Posterior vena cava (tissue), 2 donors: ENCODE measurements at regions of chr3 and their contacts with region 1.

Region 1: DNA sequence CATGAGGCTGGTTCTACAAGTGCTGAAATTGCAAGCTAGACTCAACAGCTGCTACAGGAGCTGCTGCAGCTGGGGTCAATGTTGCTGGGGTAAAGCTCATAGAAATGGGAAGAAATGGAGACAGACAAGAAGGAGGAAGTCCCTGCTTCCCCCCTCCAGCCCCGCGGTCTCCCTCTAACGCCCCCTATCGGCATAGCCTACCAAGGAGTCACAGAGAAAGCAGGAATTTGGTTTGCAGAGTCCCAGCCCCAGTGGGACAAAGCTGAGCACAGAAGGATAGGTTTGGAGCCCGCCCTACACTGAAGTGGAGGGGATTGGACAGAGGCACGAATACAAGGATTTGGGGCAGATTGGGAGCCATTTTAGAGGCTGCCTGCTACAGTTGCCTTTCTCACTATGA is 176.9 kb upstream of the ANKRD28 start:
- DNase-seq: no peak

Region 2: DNA sequence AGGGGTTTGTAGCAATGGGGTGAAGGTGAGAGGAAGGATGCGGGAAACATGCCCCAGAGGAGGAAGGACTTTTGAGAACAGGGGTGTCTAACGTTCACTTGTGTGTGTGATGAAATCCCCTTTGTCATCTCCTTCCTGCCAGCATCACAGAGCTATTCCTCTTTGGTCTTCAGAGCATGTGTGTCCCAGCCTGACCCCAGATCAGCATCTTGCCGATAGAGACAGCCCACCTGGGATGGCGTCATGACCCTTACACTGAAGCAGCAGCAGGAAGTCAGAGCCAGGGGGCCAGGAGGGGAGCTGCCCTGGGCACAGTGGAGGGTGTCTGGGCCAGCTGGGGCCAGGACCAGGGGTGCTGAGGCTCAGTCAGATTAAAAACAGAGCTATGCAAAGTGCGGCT is 1404.6 kb before region 1 on chr3:
- intact Hi-C with region 1: loop called in 1 of 2 experiments (anchors 5 kb)
- DNase-seq: no peak

Region 3: DNA sequence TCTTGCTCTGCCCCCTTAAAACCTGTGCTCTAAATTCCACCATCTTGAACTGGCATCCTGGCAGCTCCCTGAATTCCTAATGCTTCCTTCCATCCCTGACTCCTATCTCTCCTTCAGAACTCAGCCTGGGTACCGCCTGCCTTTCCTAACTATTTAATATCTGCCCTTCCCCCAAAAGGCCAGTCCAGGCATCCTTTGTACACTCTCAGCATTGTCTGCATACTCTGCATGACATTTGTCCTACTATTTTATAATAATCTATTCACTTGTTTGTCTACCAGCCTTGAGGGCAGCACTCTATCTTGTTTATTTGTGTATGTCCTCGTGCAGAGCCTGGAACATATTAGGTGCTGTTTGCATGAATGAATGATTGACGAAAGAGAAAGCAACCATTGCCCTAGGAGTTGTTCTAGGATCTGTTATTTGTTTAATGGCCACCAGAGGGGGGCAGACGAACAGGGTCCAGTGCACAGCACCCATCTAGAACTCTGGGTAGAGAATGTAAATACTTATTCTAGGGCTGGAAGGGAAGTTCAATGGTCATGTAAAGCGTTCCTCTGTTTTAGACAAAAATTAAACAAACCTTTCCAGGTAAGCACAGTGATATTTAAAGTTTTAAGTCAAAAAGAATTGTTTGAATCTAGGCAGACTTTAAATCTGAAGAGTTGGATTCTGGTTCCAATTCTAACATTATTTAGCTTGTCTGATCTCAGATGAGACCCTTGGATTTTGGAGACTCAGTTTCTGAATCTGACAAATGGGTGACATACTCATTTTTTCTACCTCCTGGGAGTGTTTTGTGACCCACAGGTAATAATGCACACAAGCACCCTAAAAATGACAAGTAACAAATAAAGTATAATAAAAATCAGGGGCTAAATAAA is 74.0 kb after region 1 on chr3:
- intact Hi-C with region 1: no loop called
- DNase-seq: no peak